ENCODE measurements at regions of chr15 and their contacts with region 1.

Region 1: GRCh38 chr15:93066834-93067509 is 22.0 kb downstream of the RGMA start:
- DNase-seq: no peak
- H3K4me3 ChIP-seq: no peak overlapping the region
- H3K27ac ChIP-seq: peak overlapping the region; percentile 76 to 96 (median 89)
- H3K4me1 ChIP-seq: peaks cover 5 to 39% (median 16%) of the 10 kb centered on the region in 4 donors
- H3K27me3 ChIP-seq: peaks cover 22% of the 10 kb centered on the region
- CTCF ChIP-seq: no peak
- EP300 ChIP-seq: peak; percentile 42
- POLR2A ChIP-seq: no peak

Region 2: DNA sequence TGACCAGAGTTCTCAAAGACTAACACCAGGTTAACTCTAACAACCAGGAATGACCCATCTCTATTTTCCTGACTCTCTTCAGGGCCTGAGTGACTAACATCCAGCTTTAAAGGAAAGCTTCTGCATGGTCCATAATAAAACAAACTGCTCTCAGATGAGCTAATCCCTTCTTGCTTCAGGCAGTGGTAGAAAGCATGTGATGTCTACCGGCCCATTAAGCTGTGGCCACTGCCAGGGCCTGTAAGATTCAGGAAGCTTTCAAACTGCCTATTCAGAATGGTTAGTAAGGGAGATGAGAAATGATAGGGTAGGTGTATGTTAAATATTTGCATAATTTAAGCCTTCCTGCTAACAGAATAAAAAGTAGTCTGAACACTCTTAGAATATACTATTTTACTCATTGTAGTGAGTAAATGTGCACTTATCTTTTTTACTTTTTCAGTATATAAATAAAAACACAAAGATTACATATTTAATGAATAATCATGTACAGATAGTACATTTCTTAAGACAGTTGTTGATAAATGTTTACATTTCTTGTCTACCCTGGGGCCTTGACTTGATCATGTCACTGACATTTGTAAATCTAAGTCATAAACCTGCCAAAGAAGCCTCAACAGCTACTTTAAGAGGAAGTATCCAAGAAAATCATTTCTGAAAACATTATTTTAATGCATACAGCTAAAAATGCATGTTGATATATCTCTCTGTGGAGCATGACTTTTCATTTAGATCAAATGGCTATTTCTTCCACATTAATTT is 1386.4 kb after region 1 on chr15:
- in situ Hi-C with region 1: no loop called
- intact Hi-C with region 1: loop called (anchors 10 kb)
- DNase-seq: no peak
- H3K4me3 ChIP-seq: no peak overlapping the region
- H3K27ac ChIP-seq: no peak overlapping the region
- H3K4me1 ChIP-seq: no peaks in the 10 kb centered on the region
- H3K27me3 ChIP-seq: no peaks in the 10 kb centered on the region
- CTCF ChIP-seq: no peak
- EP300 ChIP-seq: no peak
- POLR2A ChIP-seq: no peak

Measured in transverse colon (tissue), 4 donors.